Naive thymus-derived CD4-positive, alpha-beta T cell (primary cell): ENCODE measurements at regions of chr16 and their contacts with region 1.

Region 1: GRCh38 chr16:67521095-67521804 is 7.4 kb upstream of the RIPOR1 start:
- DNase-seq: peak; percentile 88 to 97 (median 93)
- ATAC-seq: peak; percentile 94
- H3K4me3 ChIP-seq: peak overlapping the region; percentile 92
- H3K4me3 Mint-ChIP-seq: peak overlapping the region; percentile 86 to 94 (median 92)
- H3K27ac ChIP-seq: peak overlapping the region; percentile 87
- H3K27ac Mint-ChIP-seq: peak overlapping the region; percentile 91 to 99 (median 96)
- H3K4me1 ChIP-seq: peaks cover 6 to 9% of the 10 kb centered on the region in 2 donors
- H3K4me1 Mint-ChIP-seq: peaks cover 14 to 35% (median 23%) of the 10 kb centered on the region in 7 donors
- H3K27me3 ChIP-seq: no peaks in the 10 kb centered on the region
- H3K27me3 Mint-ChIP-seq: peaks cover 0 to 28% (median 0%) of the 10 kb centered on the region in 5 donors

Region 2: GRCh38 chr16:67399181-67399733 is 122.0 kb before region 1 on chr16:
- CTCF ChIA-PET with region 1: no interaction called
- POLR2A ChIA-PET with region 1: no interaction called
- intact Hi-C with region 1: no loop called
- DNase-seq: peak in 6 of 9 donors; percentile 29 to 69 (median 46)
- ATAC-seq: peak; percentile 77
- H3K4me3 ChIP-seq: no peak overlapping the region
- H3K4me3 Mint-ChIP-seq: no peak overlapping the region
- H3K27ac ChIP-seq: no peak overlapping the region
- H3K27ac Mint-ChIP-seq: no peak overlapping the region
- H3K4me1 ChIP-seq: no peaks in the 10 kb centered on the region
- H3K4me1 Mint-ChIP-seq: peaks cover under 1 to 3% (median under 1%) of the 10 kb centered on the region in 7 donors
- H3K27me3 ChIP-seq: peaks cover 0 to 1% of the 10 kb centered on the region in 2 donors
- H3K27me3 Mint-ChIP-seq: peaks cover 6 to 26% (median 19%) of the 10 kb centered on the region in 5 donors

Region 3: GRCh38 chr16:67490335-67491096 is 30.7 kb before region 1 on chr16:
- CTCF ChIA-PET with region 1: interaction called, 174 read pairs
- POLR2A ChIA-PET with region 1: interaction called, 5 read pairs
- intact Hi-C with region 1: no loop called
- DNase-seq: no peak
- ATAC-seq: peak; percentile 25
- H3K4me3 ChIP-seq: no peak overlapping the region
- H3K4me3 Mint-ChIP-seq: no peak overlapping the region
- H3K27ac ChIP-seq: no peak overlapping the region
- H3K27ac Mint-ChIP-seq: peak overlapping the region in 5 of 9 donors; percentile 28 to 68 (median 49)
- H3K4me1 ChIP-seq: peaks cover 3 to 5% of the 10 kb centered on the region in 2 donors
- H3K4me1 Mint-ChIP-seq: peaks cover 9 to 27% (median 20%) of the 10 kb centered on the region in 7 donors
- H3K27me3 ChIP-seq: no peaks in the 10 kb centered on the region
- H3K27me3 Mint-ChIP-seq: no peaks in the 10 kb centered on the region

Region 4: DNA sequence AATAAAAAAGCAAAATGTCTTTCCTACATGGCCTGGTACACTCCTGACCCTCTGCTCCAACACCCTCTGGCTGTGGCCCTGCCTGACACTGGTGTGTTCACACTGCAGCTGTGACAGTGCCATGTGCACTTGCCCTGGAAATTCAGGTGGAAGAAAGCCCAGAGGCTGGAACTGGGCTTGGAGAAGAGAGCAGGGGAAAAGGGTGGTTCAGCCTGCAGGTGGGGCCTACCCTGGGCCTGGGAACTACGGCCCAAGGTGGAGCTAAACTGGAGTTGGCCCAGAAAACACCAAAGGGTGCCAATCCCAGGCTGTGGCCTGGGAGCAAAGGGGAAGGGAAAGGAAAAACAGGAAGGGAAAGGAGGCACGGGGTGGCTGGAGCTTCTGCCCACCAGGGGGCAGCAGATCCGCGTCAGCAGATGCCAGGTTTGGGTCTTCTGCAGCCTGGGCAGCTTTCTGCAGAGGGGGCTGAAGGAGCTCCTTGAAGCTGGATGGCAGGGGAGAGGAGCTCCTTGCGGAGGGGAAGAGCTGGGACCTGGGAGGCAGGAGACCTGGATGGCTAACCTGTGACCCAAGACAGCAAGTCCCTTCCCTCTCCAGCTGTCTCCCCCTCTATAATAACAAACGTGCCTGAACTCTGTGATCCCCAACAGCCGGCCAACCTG is 25.6 kb after region 1 on chr16:
- CTCF ChIA-PET with region 1: interaction called, 36 read pairs
- POLR2A ChIA-PET with region 1: interaction called, 15 read pairs
- intact Hi-C with region 1: loop called in 1 of 2 experiments (anchors 1 kb)
- DNase-seq: peak; percentile 57 to 78 (median 70)
- ATAC-seq: peak; percentile 55
- H3K4me3 ChIP-seq: peak overlapping the region; percentile 56
- H3K4me3 Mint-ChIP-seq: peak overlapping the region; percentile 75 to 92 (median 86)
- H3K27ac ChIP-seq: peak overlapping the region; percentile 70
- H3K27ac Mint-ChIP-seq: peak overlapping the region; percentile 59 to 99 (median 97)
- H3K4me1 ChIP-seq: peaks cover 19 to 40% of the 10 kb centered on the region in 2 donors
- H3K4me1 Mint-ChIP-seq: peaks cover 25 to 56% (median 51%) of the 10 kb centered on the region in 7 donors
- H3K27me3 ChIP-seq: no peaks in the 10 kb centered on the region
- H3K27me3 Mint-ChIP-seq: no peaks in the 10 kb centered on the region

Region 5: DNA sequence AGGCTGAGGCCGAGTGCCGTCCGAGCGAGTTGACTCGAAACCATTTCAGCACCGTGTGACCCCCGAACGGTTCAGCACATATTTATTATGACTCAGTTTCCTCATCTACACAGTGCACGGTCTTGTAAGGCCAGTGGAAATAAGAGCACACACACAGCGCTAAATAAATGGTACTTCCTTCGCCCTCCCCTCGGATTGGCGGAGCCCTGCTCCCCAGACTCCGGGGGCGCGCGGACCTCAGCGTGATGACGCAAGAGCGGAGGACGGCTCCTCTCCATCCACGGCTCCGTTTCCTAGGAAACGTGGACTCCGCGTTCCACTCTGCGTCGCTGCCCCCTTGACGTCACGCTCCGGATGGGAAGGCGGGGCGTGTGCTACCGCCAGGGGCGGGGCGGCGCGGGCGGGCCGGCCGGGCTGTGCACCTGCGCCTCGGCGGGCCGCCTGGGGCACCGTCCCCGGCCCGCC is 139.3 kb after region 1 on chr16 and contains the start of gene PARD6A:
- CTCF ChIA-PET with region 1: interaction called, 17 read pairs
- POLR2A ChIA-PET with region 1: interaction called, 9 read pairs
- intact Hi-C with region 1: no loop called
- DNase-seq: peak; percentile 81 to 95 (median 93)
- ATAC-seq: peak; percentile 89
- H3K4me3 ChIP-seq: peak within 1 kb of the TSS; percentile 99
- H3K4me3 Mint-ChIP-seq: peak within 1 kb of the TSS; percentile 90 to 97 (median 94)
- H3K27ac ChIP-seq: peak within 1 kb of the TSS; percentile 97
- H3K27ac Mint-ChIP-seq: peak within 1 kb of the TSS; percentile 84 to 98 (median 97)
- H3K4me1 ChIP-seq: peaks cover 11 to 17% of the 10 kb centered on the region in 2 donors
- H3K4me1 Mint-ChIP-seq: peaks cover 15 to 40% (median 22%) of the 10 kb centered on the region in 7 donors
- H3K27me3 ChIP-seq: no peaks in the 10 kb centered on the region
- H3K27me3 Mint-ChIP-seq: no peaks in the 10 kb centered on the region
- total RNA-seq, gene PARD6A: 4.5 to 11.2 (median 4.7) TPM

Region 6: GRCh38 chr16:67816240-67817031 is 295.2 kb after region 1 on chr16:
- CTCF ChIA-PET with region 1: no interaction called
- POLR2A ChIA-PET with region 1: no interaction called
- intact Hi-C with region 1: loop called in 1 of 2 experiments (anchors 1 kb)
- DNase-seq: peak; percentile 76 to 98 (median 87)
- ATAC-seq: peak; percentile 100
- H3K4me3 ChIP-seq: no peak overlapping the region
- H3K4me3 Mint-ChIP-seq: peak overlapping the region in 7 of 10 donors; percentile 30 to 62 (median 49)
- H3K27ac ChIP-seq: no peak overlapping the region
- H3K27ac Mint-ChIP-seq: peak overlapping the region in 4 of 9 donors; percentile 13 to 77 (median 46)
- H3K4me1 ChIP-seq: no peaks in the 10 kb centered on the region
- H3K4me1 Mint-ChIP-seq: peaks cover 0 to 8% (median 6%) of the 10 kb centered on the region in 7 donors
- H3K27me3 ChIP-seq: no peaks in the 10 kb centered on the region
- H3K27me3 Mint-ChIP-seq: peaks cover 0 to 6% (median 0%) of the 10 kb centered on the region in 5 donors

Region 7: DNA sequence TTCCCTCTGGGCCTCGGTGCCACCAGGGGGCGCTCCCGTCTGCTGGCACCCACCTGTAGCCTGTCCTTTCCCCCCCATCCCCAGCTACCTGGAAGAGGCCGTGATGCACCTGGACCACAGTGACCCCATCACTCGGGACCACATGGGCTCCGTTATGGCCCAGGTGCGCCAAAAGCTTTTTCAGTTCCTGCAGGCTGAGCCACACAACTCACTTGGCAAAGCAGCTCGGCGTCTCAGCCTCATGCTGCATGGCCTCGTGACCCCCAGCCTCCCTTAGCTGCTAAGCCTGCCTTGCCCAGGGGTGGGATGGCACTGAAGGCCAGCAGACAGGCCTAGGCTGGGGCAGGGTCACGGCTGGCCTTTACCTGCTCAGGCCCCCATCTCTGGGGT is 362.6 kb after region 1 on chr16:
- CTCF ChIA-PET with region 1: interaction called, 3 read pairs
- POLR2A ChIA-PET with region 1: no interaction called
- intact Hi-C with region 1: loop called in 1 of 2 experiments (anchors 1 kb)
- DNase-seq: peak; percentile 62 to 83 (median 74)
- ATAC-seq: peak; percentile 84
- H3K4me3 ChIP-seq: no peak overlapping the region
- H3K4me3 Mint-ChIP-seq: no peak overlapping the region
- H3K27ac ChIP-seq: no peak overlapping the region
- H3K27ac Mint-ChIP-seq: peak overlapping the region in 4 of 9 donors; percentile 19 to 42 (median 36)
- H3K4me1 ChIP-seq: no peaks in the 10 kb centered on the region
- H3K4me1 Mint-ChIP-seq: peaks cover 0 to 6% (median 0%) of the 10 kb centered on the region in 7 donors
- H3K27me3 ChIP-seq: no peaks in the 10 kb centered on the region
- H3K27me3 Mint-ChIP-seq: no peaks in the 10 kb centered on the region

Region 8: DNA sequence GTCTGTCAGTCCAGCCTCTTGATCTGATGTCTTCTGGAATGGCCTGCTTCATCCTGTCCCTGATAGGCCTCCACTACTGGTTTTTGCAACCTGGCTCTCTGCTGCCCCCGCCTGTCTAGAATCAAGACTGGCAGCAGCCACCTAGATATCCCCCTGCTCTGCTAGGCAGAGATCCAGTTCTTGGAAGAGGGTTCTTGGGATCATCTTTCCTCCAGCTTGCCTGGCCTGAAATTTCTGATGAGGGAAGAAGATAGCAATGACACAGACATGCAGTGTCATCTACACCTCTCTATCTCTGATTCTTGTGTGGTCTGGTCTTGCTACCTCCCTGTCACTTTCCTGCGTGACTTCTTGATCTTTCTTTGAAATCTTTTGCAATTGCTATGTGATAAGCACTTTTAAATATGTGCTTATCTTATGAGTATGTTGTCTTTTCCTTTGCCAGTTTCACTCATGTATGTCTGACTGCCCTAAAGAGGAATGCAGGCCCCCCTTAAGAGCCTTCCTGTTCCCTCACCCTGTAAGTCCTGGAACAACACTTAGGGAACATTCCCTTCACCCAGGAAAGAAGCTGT is 543.6 kb after region 1 on chr16:
- CTCF ChIA-PET with region 1: interaction called, 5 read pairs
- POLR2A ChIA-PET with region 1: no interaction called
- intact Hi-C with region 1: loop called in 1 of 2 experiments (anchors 5 kb)
- DNase-seq: peak; percentile 45 to 72 (median 65)
- ATAC-seq: peak; percentile 84
- H3K4me3 ChIP-seq: no peak overlapping the region
- H3K4me3 Mint-ChIP-seq: peak overlapping the region; percentile 3 to 69 (median 34)
- H3K27ac ChIP-seq: peak overlapping the region; percentile 52
- H3K27ac Mint-ChIP-seq: peak overlapping the region; percentile 65 to 90 (median 83)
- H3K4me1 ChIP-seq: peaks cover 56 to 67% of the 10 kb centered on the region in 2 donors
- H3K4me1 Mint-ChIP-seq: peaks cover 60 to 86% (median 76%) of the 10 kb centered on the region in 7 donors
- H3K27me3 ChIP-seq: no peaks in the 10 kb centered on the region
- H3K27me3 Mint-ChIP-seq: no peaks in the 10 kb centered on the region